Left ventricle myocardium superior (tissue), 1 donor: ENCODE measurements at regions of chr11 and their contacts with region 1.

Region 1: DNA sequence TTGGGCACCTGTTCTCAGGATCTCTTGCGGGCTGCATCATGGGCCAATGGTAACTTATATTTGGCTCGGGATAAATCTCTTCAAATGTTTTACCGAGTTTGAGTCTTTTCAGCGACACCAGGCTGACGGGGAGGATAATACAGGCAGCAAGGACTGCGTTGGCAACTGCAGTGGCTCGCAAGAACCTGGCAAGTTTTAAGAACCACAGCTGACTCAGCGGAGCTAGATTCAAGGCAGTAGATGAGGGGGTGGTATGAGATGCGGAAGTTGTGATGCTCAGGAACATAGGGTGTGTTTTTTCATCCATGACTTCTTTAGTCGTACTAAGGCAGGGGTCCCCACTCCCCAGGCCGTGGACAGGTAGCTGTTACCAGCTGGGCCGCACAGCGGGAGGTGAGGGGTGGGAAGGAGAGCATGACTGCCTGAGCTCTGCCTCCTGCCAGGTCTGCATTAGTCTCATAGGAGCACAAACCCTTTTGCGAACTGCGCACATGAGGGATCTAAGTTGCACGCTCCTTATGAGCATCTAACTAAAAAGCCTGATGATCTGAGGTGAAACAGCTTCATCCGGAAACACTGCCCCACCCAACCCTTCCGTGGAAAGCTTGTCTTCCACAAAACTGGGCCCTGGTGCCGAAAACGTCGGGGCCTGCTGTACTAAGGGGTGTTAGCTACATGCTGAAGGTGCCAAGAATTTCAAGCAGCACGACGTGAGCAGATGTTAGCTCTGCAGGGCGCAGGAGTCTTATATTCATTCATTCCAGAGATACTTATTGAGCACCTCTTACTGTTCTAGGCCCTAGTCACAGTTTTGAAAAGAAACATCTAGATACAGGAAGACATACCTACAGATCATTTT is 6.4 kb upstream of the JAM3 start:
- DNase-seq: no peak
- ATAC-seq: no peak

Region 2: DNA sequence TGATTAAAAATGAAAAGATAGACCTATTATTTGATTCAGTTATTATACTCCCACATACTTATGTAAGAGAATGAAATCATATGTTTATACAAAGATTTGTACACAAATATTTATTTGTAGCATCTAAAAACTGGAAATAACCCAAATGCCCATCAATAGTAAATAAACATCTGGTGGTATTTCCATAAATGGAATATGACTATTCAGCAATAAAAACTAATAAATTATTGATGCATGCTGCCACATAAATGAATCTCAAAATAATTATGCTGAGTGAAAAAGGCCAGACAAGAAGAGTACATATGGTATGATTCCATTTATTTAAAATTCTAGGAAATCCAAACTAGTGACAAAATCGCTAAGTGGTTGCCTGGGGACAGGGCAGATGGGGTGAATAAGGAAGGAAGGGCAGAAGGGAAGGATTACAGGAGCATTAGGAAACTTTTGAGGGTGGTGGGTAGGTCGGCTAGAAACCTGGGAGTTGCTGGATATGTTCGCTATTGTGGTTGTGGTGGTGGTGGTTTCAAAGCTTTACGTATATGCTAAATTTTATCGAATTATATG is 47.8 kb after region 1 on chr11:
- intact Hi-C with region 1: no loop called
- DNase-seq: no peak
- ATAC-seq: no peak

Region 3: DNA sequence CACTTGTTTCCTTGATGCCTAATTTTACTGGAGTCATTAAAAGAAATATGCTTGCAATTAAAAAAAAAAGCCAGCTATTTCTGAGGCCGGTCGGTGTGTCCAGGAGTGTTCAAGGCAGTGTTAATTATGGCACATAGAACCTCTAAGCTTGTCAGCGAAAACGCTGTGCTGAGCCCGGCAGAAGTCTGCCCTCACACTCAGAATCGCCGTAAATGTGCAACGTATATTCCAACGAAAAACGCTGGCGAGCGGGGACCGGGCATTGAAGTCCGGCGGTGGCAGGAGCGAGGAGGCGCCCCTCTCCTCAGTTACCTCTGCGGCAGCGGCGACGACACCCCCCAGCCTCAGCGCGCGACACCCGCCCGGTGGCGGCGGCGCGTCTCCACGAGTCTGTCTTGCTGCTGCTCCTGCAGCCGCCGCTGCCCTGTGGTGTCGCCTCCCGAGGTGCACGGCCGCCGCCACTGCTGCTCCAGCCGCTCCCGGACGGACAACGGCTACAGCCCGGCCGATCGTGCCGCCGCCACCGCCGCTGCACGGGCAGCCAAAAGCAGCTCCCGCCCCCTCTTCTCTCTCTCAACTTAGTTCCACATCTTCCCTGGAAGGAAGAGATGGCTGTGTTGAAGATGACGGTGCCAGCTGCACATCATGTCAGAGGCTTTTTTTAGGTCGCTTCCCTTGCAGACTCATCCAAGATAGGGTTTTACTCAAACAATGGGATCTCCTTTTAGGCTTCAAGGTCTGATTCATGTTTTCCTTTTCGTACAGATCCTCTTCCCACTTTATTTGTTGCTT is 62.4 kb after region 1 on chr11:
- intact Hi-C with region 1: loop called (anchors 5 kb)
- DNase-seq: peak; percentile 79
- ATAC-seq: peak; percentile 75